CD8-positive, alpha-beta T cell (primary cell): ENCODE measurements at regions of chrX and their contacts with region 1.

Region 1: DNA sequence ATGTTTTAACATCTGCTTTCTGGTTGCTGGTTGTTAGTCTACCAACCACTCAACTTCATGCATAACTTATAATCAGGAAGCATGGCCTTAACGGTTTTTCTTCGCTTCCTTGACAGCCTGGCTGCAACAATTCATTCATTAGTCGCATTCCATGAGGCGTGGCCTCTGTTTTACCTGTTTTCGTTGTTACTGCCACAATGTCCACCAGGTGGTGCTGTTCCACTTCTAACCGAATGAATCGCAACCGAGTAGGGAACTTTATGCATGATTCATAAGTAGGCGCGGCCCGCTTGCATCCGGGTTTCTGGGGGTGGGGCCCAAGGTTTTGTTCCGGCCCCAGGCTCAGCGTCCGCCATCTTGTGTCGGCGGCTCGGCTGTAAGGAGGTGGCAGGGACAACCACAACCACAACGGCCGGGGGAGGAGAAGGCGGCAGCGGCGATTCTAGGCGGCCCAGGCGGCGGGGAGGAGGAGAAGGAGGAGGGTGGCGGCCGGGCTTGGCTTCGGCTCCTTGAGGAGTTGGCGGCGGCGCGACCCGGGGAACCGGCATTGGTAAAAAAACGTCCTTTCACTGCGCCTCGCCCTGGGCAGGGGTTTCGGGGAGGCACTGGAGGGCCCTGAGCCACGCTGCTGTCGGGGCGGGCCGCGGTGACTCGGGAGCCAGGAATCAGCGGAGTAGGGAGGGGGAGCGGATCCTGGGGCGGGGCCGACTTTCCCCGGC is at the start of gene UBA1:
- DNase-seq: peak; percentile 81 to 98 (median 93)
- ATAC-seq: peak; percentile 73
- H3K4me3 ChIP-seq: peak within 1 kb of the TSS; percentile 78 to 92
- H3K4me3 Mint-ChIP-seq: peak within 1 kb of the TSS; percentile 93
- H3K27ac ChIP-seq: peak within 1 kb of the TSS; percentile 81 to 89
- H3K27ac Mint-ChIP-seq: peak within 1 kb of the TSS; percentile 98
- H3K4me1 ChIP-seq: peaks cover 45% of the 10 kb centered on the region
- H3K4me1 Mint-ChIP-seq: peaks cover 54% of the 10 kb centered on the region
- H3K27me3 ChIP-seq: no peaks in the 10 kb centered on the region
- H3K27me3 Mint-ChIP-seq: no peaks in the 10 kb centered on the region
- CTCF ChIP-seq: peak; percentile 36
- total RNA-seq, gene UBA1: 63.8 to 64.7 TPM

Region 2: DNA sequence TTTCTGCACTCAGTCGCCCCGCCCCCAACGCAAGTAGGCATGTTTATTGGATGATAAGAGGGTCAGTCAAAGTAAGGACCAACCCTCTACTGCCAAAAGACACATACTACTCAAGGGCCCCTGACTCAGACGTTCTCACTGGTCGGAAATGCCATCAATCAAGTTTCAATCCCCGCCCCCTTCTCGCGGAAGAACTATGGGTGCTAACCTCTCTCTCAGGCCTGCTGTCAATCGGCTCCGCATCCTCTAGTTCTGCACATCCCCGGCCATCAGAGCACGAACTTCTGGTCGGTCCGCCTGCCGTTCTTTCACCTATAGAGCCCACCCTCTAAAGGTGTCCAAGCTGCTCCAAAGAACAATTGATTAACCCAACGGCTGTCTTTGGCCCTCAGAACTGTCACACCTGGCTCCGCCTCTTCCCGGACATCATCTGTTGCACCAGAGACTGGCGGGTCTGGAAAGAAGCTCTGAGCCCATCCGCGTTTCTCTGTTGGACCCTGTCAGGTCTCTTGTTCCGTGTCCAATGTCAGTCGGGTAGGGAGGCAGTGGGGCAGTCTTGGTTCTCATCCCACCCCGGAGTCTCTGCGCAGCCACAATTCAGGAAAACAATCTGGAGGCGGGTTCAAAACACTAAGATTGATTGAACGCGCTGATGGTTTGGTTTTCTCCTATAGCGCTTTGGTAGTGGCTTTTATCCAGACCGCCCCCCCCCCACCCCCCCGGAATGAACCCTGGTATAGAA is 64.3 kb before region 1 on chrX:
- CTCF ChIA-PET with region 1: no interaction called
- POLR2A ChIA-PET with region 1: no interaction called
- intact Hi-C with region 1: loop called in 1 of 2 experiments (anchors 2 kb)
- DNase-seq: peak; percentile 76 to 95 (median 86)
- ATAC-seq: peak; percentile 98
- H3K4me3 ChIP-seq: peak overlapping the region; percentile 74 to 80
- H3K4me3 Mint-ChIP-seq: peak overlapping the region; percentile 97
- H3K27ac ChIP-seq: peak overlapping the region; percentile 73 to 85
- H3K27ac Mint-ChIP-seq: peak overlapping the region; percentile 98
- H3K4me1 ChIP-seq: no peaks in the 10 kb centered on the region
- H3K4me1 Mint-ChIP-seq: peaks cover 4% of the 10 kb centered on the region
- H3K27me3 ChIP-seq: no peaks in the 10 kb centered on the region
- H3K27me3 Mint-ChIP-seq: no peaks in the 10 kb centered on the region
- CTCF ChIP-seq: no peak

Region 3: GRCh38 chrX:47233337-47234113 is 39.9 kb after region 1 on chrX:
- CTCF ChIA-PET with region 1: no interaction called
- POLR2A ChIA-PET with region 1: interaction called, 15 read pairs
- intact Hi-C with region 1: loop called (anchors 1 kb)
- DNase-seq: peak; percentile 81 to 98 (median 95)
- ATAC-seq: peak; percentile 89
- H3K4me3 ChIP-seq: peak overlapping the region; percentile 77 to 96
- H3K4me3 Mint-ChIP-seq: peak overlapping the region; percentile 96
- H3K27ac ChIP-seq: peak overlapping the region; percentile 100
- H3K27ac Mint-ChIP-seq: peak overlapping the region; percentile 99
- H3K4me1 ChIP-seq: peaks cover 34% of the 10 kb centered on the region
- H3K4me1 Mint-ChIP-seq: peaks cover 40% of the 10 kb centered on the region
- H3K27me3 ChIP-seq: no peaks in the 10 kb centered on the region
- H3K27me3 Mint-ChIP-seq: no peaks in the 10 kb centered on the region
- CTCF ChIP-seq: no peak

Region 4: GRCh38 chrX:47384502-47384901 is 190.9 kb after region 1 on chrX:
- CTCF ChIA-PET with region 1: interaction called, 41 read pairs
- POLR2A ChIA-PET with region 1: interaction called, 4 read pairs
- intact Hi-C with region 1: loop called in 1 of 2 experiments (anchors 1 kb)
- DNase-seq: peak; percentile 41 to 84 (median 69)
- ATAC-seq: peak; percentile 49
- H3K4me3 ChIP-seq: no peak overlapping the region
- H3K4me3 Mint-ChIP-seq: peak overlapping the region; percentile 35
- H3K27ac ChIP-seq: no peak overlapping the region
- H3K27ac Mint-ChIP-seq: peak overlapping the region; percentile 81
- H3K4me1 ChIP-seq: peaks cover 22% of the 10 kb centered on the region
- H3K4me1 Mint-ChIP-seq: peaks cover 23% of the 10 kb centered on the region
- H3K27me3 ChIP-seq: no peaks in the 10 kb centered on the region
- H3K27me3 Mint-ChIP-seq: no peaks in the 10 kb centered on the region
- CTCF ChIP-seq: peak; percentile 63

Region 5: DNA sequence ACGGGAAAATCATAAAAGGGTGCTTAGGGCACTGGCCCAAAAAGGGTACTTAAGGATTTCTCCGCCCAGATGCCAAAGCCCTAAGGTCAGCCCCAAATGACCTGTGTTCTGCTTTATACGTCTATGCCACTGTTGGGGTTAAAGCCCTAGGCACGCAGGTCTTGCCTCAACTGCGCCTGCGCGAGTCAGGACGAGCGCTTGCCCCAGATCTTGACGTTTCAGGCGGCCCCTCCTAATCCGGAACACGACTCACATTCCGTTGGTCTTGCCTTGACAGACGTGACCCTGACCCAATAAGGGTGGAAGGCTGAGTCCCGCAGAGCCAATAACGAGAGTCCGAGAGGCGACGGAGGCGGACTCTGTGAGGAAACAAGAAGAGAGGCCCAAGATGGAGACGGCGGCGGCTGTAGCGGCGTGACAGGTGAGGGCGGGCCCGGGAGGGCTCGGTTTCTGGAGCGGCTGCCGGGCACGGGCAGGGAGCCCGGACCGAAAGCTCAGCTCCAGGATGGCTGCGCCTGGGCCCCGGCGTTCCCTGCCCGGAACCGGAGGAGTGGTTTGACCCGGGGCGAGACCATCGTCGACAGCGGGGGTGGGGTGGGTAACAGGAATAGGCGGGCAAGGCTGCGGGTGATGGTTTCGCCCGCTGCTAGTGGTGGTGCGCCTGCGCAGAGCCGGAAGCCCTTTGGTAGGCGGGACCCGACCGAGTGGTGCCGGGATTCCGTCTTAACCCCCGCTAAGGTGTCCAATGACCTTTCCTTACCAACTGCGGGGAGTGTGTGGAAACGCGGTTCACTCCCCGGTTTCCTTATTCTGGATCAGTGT is 367.4 kb after region 1 on chrX and contains the start of gene ARAF:
- CTCF ChIA-PET with region 1: no interaction called
- POLR2A ChIA-PET with region 1: no interaction called
- intact Hi-C with region 1: loop called in 1 of 2 experiments (anchors 2 kb)
- DNase-seq: peak; percentile 86 to 99 (median 94)
- ATAC-seq: peak; percentile 87
- H3K4me3 ChIP-seq: peak within 1 kb of the TSS; percentile 58 to 91
- H3K4me3 Mint-ChIP-seq: peak within 1 kb of the TSS; percentile 95
- H3K27ac ChIP-seq: peak within 1 kb of the TSS; percentile 98 to 99
- H3K27ac Mint-ChIP-seq: peak within 1 kb of the TSS; percentile 99
- H3K4me1 ChIP-seq: peaks cover 29% of the 10 kb centered on the region
- H3K4me1 Mint-ChIP-seq: peaks cover 46% of the 10 kb centered on the region
- H3K27me3 ChIP-seq: no peaks in the 10 kb centered on the region
- H3K27me3 Mint-ChIP-seq: no peaks in the 10 kb centered on the region
- CTCF ChIP-seq: no peak
- total RNA-seq, gene ARAF: 125 to 134 TPM

Region 6: GRCh38 chrX:47836164-47837072 is 642.8 kb after region 1 on chrX and contains the start of gene ZNF81:
- CTCF ChIA-PET with region 1: no interaction called
- POLR2A ChIA-PET with region 1: no interaction called
- intact Hi-C with region 1: loop called (anchors 2 to 10 kb)
- DNase-seq: peak; percentile 80 to 95 (median 91)
- ATAC-seq: peak; percentile 96
- H3K4me3 ChIP-seq: peak within 1 kb of the TSS; percentile 74 to 75
- H3K4me3 Mint-ChIP-seq: peak within 1 kb of the TSS; percentile 98
- H3K27ac ChIP-seq: peak within 1 kb of the TSS; percentile 65 to 75
- H3K27ac Mint-ChIP-seq: peak within 1 kb of the TSS; percentile 97
- H3K4me1 ChIP-seq: peaks cover 14% of the 10 kb centered on the region
- H3K4me1 Mint-ChIP-seq: peaks cover 27% of the 10 kb centered on the region
- H3K27me3 ChIP-seq: no peaks in the 10 kb centered on the region
- H3K27me3 Mint-ChIP-seq: no peaks in the 10 kb centered on the region
- CTCF ChIP-seq: no peak
- total RNA-seq, gene ZNF81: 6.1 to 7.2 TPM